Activated CD4-positive, alpha-beta memory T cell treated with anti-CD3 and anti-CD28 coated beads for 36 hours (primary cell): ENCODE measurements at regions of chr11 and their contacts with region 1.

Region 1: DNA sequence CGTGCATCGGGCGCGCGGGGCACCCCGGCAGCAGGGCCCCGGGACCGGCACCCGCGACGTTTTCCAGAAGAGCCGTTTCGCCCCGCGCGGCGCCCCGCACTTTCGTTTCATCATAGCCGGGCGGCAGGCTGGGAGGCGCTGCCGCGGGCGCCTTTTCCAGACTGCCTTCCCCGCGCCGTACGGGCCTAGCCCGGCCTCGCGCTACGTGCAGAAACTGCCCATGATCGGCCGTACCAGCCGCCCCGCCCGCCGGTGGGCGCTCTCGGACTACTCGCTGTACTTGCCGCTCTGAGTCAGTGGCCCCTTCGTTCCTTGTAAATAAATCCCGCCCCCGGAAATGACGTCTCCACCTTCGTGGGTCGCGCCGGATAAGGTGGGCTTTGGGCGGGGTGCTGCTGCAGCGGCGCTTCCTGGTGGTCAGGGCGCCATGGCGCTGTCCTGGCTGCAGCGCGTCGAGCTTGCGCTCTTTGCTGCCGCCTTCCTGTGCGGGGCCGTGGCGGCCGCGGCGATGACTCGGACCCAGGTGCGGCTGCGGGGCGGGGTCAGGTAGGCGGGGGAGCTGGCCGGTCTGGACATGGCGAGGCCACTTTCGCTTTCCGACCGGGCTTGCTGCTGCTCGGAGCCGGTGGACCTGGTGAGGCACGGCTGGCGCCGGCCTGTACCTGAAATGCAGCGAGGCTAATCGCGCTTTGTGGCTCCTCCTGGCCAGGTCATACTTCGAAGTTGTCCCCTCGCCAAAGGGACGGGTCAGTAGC is at the start of gene TMEM179B:
- DNase-seq: peak; percentile 98
- H3K4me3 Mint-ChIP-seq: peak within 1 kb of the TSS; percentile 95
- H3K27ac Mint-ChIP-seq: peak within 1 kb of the TSS; percentile 93
- H3K4me1 Mint-ChIP-seq: peaks cover 39% of the 10 kb centered on the region
- H3K27me3 Mint-ChIP-seq: no peaks in the 10 kb centered on the region
- total RNA-seq, gene TMEM179B: 25.0 to 25.5 TPM

Region 2: DNA sequence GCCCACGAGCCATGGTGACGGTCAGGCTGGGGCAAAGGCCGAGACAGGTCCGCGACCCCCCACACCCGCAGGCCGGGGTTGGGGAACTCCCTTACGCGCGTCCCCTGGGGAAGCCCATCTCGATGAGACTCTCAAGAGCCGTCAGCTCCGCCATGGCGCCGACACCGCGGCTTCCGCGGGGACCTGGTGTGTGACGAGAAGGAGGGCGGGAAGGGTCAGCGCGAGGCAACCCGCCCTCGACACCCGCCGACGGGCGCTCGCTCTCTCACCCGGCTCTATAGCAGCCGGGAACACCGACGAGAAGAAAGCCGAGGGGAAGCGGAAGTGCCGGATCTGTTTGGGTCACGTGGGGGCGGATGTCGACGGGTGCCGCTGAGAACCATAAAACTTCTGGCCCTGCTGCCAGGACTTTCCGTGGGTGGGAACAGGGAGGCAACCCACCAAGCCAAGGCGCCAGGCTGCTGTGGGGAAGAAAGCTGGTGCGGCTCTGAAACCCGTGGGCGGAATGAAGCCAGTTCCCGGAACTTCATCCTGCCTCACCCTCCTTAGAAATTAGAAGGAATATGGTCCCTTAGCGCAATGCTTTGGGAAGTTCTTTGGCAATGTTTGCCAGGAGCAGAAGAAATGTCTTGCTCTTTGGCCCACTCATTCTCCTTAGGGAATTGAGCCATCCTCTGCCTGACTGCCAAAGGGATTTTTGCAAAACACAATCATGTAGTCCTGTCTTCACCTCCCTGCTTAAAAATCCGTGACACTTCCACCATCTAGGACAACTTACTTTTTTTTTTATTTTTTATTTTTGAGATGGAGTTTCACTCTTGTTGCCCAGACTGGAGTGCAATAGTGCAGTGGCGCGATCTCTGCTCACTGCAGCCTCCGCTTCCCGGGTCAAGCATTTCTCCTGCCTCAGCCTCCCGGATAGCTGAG is 108.1 kb before region 1 on chr11 and contains the start of gene UBXN1:
- CTCF ChIA-PET with region 1: interaction called, 13 read pairs
- POLR2A ChIA-PET with region 1: no interaction called
- intact Hi-C with region 1: no loop called
- DNase-seq: peak; percentile 94
- H3K4me3 Mint-ChIP-seq: peak within 1 kb of the TSS; percentile 86
- H3K27ac Mint-ChIP-seq: peak within 1 kb of the TSS; percentile 90
- H3K4me1 Mint-ChIP-seq: peaks cover 35% of the 10 kb centered on the region
- H3K27me3 Mint-ChIP-seq: no peaks in the 10 kb centered on the region
- total RNA-seq, gene UBXN1: 110 to 116 TPM

Region 3: GRCh38 chr11:62753736-62754603 is 33.2 kb before region 1 on chr11 and contains the start of gene ZBTB3:
- CTCF ChIA-PET with region 1: interaction called, 32 read pairs
- POLR2A ChIA-PET with region 1: interaction called, 11 read pairs
- intact Hi-C with region 1: no loop called
- DNase-seq: peak; percentile 98
- H3K4me3 Mint-ChIP-seq: peak within 1 kb of the TSS; percentile 99
- H3K27ac Mint-ChIP-seq: peak within 1 kb of the TSS; percentile 99
- H3K4me1 Mint-ChIP-seq: peaks cover 23% of the 10 kb centered on the region
- H3K27me3 Mint-ChIP-seq: no peaks in the 10 kb centered on the region
- total RNA-seq, gene ZBTB3: 8.4 to 9.7 TPM

Region 4: GRCh38 chr11:62799486-62799885 is 12.3 kb after region 1 on chr11:
- CTCF ChIA-PET with region 1: interaction called, 37 read pairs
- POLR2A ChIA-PET with region 1: interaction called, 4 read pairs
- intact Hi-C with region 1: loop called (anchors 1 kb)
- DNase-seq: no peak
- H3K4me3 Mint-ChIP-seq: no peak overlapping the region
- H3K27ac Mint-ChIP-seq: no peak overlapping the region
- H3K4me1 Mint-ChIP-seq: peaks cover 26% of the 10 kb centered on the region
- H3K27me3 Mint-ChIP-seq: no peaks in the 10 kb centered on the region

Region 5: GRCh38 chr11:62831520-62832335 is 44.5 kb after region 1 on chr11 and contains the start of gene STX5:
- CTCF ChIA-PET with region 1: interaction called, 39 read pairs
- POLR2A ChIA-PET with region 1: interaction called, 19 read pairs
- intact Hi-C with region 1: loop called (anchors 1 kb)
- DNase-seq: peak; percentile 100
- H3K4me3 Mint-ChIP-seq: peak within 1 kb of the TSS; percentile 84
- H3K27ac Mint-ChIP-seq: peak within 1 kb of the TSS; percentile 93
- H3K4me1 Mint-ChIP-seq: peaks cover 42% of the 10 kb centered on the region
- H3K27me3 Mint-ChIP-seq: no peaks in the 10 kb centered on the region
- total RNA-seq, gene STX5: 24.6 to 29.2 TPM